Dorsolateral prefrontal cortex (tissue), 120 donors: ENCODE measurements at regions of chr10 and their contacts with region 1.

Region 1: DNA sequence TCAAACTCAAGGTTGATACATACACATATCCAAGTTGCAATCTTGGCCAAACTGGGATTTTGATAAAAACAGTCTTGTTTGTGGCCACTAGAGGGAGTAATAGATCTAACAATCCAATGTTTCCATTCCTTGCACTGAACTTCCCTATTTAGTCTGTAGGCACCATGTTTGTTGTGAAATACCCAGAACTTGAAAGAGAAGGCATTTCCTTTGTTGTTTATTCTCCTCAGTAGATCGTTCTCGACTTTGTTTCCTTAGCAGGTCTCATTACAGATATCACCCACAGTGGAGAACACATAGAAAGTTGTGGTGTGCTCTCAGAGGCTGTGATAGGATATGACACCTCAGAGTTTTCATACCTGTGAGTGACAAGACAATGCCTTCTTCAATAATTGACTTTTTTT is 70.3 kb upstream of the MXI1 start:
- DNase-seq: no peak
- H3K4me3 ChIP-seq: peak overlapping the region in 3 of 59 donors; percentile 0 to 17 (median 15)
- H3K27ac ChIP-seq: peak overlapping the region in 57 of 59 donors; percentile 4 to 88 (median 66)
- H3K27me3 ChIP-seq: no peaks in the 10 kb centered on the region
- CTCF ChIP-seq: peak; percentile 83 to 97 (median 90)

Region 2: GRCh38 chr10:109883859-109884771 is 253.0 kb before region 1 on chr10:
- intact Hi-C with region 1: loop called in 1 of 2 experiments (anchors 5 kb)
- DNase-seq: peak; percentile 37 to 81 (median 76)
- H3K4me3 ChIP-seq: peak overlapping the region; percentile 19 to 65 (median 50)
- H3K27ac ChIP-seq: peak overlapping the region; percentile 28 to 94 (median 85)
- H3K27me3 ChIP-seq: no peaks in the 10 kb centered on the region
- CTCF ChIP-seq: peak; percentile 81 to 99 (median 97)

Region 3: DNA sequence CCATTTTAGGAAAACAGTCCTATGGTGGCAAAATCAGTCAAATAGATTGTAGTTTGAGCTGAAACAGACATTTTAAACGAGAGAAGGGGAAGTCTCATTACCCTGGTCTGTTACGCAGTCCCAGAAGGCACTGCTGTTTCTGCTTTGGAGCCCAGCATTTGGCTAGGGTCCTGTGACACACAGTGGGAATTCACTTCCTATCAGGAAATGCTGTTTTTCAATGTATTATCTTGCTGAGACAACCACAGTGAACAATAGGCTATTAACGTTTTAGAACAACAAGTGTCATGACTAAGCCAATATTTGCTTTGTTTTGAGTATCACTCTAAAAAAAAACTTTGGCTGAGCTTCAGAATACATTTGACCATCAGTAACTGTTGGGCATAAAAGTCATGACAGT is 55.2 kb before region 1 on chr10:
- intact Hi-C with region 1: loop called (anchors 5 to 10 kb)
- DNase-seq: peak in 5 of 10 donors; percentile 44 to 74 (median 57)
- H3K4me3 ChIP-seq: peak overlapping the region in 11 of 59 donors; percentile 1 to 34 (median 15)
- H3K27ac ChIP-seq: peak overlapping the region; percentile 35 to 96 (median 88)
- H3K27me3 ChIP-seq: no peaks in the 10 kb centered on the region
- CTCF ChIP-seq: peak in 2 of 56 donors; percentile 9 to 10

Region 4: GRCh38 chr10:110203500-110204455 is 66.6 kb after region 1 on chr10:
- intact Hi-C with region 1: loop called (anchors 5 kb)
- DNase-seq: no peak
- H3K4me3 ChIP-seq: no peak overlapping the region
- H3K27ac ChIP-seq: peak overlapping the region in 2 of 59 donors; percentile 7 to 9
- H3K27me3 ChIP-seq: no peaks in the 10 kb centered on the region
- CTCF ChIP-seq: no peak

Region 5: GRCh38 chr10:110225756-110226542 is 88.8 kb after region 1 on chr10:
- intact Hi-C with region 1: loop called in 1 of 2 experiments (anchors 5 kb)
- DNase-seq: peak; percentile 80 to 94 (median 92)
- H3K4me3 ChIP-seq: peak overlapping the region; percentile 49 to 98 (median 86)
- H3K27ac ChIP-seq: peak overlapping the region; percentile 78 to 100 (median 99)
- H3K27me3 ChIP-seq: no peaks in the 10 kb centered on the region
- CTCF ChIP-seq: peak; percentile 16 to 78 (median 60)

Region 6: DNA sequence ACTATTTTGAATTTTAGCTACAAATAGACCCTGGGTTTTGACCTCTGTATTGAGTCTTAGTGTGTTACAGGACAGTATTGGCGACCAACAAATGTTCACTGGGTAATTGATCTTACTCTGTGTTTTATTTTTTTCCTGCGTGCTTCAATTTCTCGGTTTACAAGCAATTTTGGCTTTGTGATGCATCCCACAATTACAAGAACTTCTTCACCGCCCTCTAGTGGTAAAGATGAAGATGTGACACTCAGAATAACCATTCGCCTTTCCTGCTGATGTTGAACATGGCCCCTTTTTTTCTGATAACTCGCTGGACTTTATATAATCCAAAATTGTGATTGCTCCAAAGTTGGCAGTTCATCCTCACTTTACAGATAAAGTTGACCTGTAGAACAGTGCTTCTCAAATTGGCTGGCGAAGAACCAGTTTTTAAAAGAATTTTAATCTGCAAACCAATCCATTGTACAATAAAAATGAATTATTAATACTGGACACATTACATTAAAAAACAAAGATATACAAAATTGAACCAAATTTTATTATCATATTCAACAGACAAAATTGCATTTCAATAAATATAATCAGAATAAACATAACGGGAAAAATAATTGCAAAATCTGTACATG is 410.1 kb after region 1 on chr10:
- intact Hi-C with region 1: loop called (anchors 5 kb)
- DNase-seq: peak in 1 of 10 donors; percentile 14
- H3K4me3 ChIP-seq: peak overlapping the region in 1 of 59 donors; percentile 15
- H3K27ac ChIP-seq: peak overlapping the region in 31 of 59 donors; percentile 0 to 83 (median 52)
- H3K27me3 ChIP-seq: peaks cover 0 to 12% (median 0%) of the 10 kb centered on the region in 45 donors
- CTCF ChIP-seq: peak; percentile 78 to 94 (median 86)